ENCODE measurements at regions of chr4 and their contacts with region 1.

Region 1: DNA sequence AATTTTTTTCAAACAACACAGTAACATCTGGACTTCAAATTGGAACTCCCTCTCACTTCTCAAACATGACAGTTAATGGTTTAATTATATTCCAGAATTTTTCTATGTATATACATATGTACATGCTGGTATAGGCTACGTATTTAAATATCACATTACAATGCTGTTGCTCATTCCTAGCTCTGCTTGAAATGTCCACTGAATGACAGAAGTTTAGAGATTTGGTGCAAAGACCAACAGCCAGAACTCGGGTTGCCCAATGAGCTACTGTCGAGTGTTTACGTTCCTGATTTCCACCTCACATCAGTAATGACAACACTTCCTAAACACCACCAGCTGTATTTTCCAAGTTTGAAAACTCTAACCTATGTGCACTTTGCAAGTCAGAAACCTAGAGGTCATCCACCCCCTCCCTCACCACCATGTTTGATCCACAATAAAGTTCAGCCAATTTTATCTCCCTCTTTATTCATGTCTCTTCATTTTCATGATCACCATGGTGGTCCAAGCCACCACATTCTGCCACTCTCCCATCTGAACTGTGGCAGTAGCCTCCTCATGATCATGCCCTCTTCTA is 49.3 kb upstream of the RPL34 start:
- H3K4me3 Mint-ChIP-seq: no peak overlapping the region
- H3K27ac Mint-ChIP-seq: no peak overlapping the region
- H3K4me1 Mint-ChIP-seq: no peaks in the 10 kb centered on the region
- H3K27me3 Mint-ChIP-seq: peaks cover 6% of the 10 kb centered on the region

Region 2: GRCh38 chr4:108018040-108018883 is 552.8 kb before region 1 on chr4:
- intact Hi-C with region 1: loop called (anchors 1 kb)
- H3K4me3 Mint-ChIP-seq: no peak overlapping the region
- H3K27ac Mint-ChIP-seq: no peak overlapping the region
- H3K4me1 Mint-ChIP-seq: no peaks in the 10 kb centered on the region
- H3K27me3 Mint-ChIP-seq: no peaks in the 10 kb centered on the region